Activated CD4-positive, alpha-beta T cell treated with anti-CD3 and anti-CD28 coated beads, Interleukin-2, amount 10 ng/mL, durations not matched to agents 7 days and 5 days (primary cell): ENCODE measurements at regions of chr12 and their contacts with region 1.

Region 1: GRCh38 chr12:49069507-49070346 is at the start of gene RHEBL1:
- DNase-seq: peak; percentile 99
- H3K4me3 Mint-ChIP-seq: peak within 1 kb of the TSS; percentile 86
- H3K27ac Mint-ChIP-seq: peak within 1 kb of the TSS; percentile 85
- H3K4me1 Mint-ChIP-seq: peaks cover 24% of the 10 kb centered on the region
- H3K27me3 Mint-ChIP-seq: no peaks in the 10 kb centered on the region
- total RNA-seq, gene RHEBL1: 4.6 to 6.4 TPM

Region 2: DNA sequence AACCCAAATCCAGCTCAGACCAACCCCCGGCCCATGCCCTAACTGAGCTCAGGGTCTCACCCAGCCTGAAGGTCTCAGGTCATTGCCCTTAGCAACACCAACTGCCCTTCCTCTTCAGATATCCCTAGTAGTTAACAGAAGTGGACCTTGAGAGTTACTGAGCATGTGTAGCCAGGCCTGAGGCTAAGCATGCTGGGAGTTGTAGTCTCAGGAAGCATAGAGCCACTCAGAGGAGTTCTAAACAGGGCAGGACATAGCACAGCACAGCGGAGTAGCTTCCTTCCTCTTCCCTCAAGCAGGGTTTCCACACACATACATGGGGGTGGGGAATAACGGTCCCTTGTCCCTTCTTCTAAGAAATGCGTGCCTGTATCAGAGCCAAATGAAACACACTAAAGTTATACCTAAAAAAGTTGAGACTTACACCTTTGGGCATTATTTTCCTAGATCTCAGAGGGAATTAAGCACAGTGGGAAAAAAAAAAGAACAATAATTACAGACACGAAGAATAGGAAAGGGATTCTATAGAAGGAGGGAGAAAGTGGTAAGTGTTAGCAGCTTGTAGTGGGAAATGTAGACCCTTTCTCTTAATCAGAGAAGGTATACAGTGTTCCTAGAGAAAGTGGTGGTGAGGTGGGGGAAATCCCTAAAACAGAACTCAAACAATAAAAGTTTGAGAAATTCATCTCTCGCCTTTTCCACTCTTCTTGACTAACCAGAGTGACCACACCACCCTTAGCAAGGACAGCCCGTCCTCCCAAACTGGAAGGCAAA is 13.6 kb before region 1 on chr12:
- CTCF ChIA-PET with region 1: interaction called, 11 read pairs
- POLR2A ChIA-PET with region 1: interaction called, 3 read pairs
- DNase-seq: peak; percentile 70
- H3K4me3 Mint-ChIP-seq: peak overlapping the region; percentile 94
- H3K27ac Mint-ChIP-seq: peak overlapping the region; percentile 19
- H3K4me1 Mint-ChIP-seq: peaks cover 44% of the 10 kb centered on the region
- H3K27me3 Mint-ChIP-seq: no peaks in the 10 kb centered on the region

Region 3: GRCh38 chr12:49079793-49080192 is 10.1 kb after region 1 on chr12:
- CTCF ChIA-PET with region 1: interaction called, 20 read pairs
- POLR2A ChIA-PET with region 1: interaction called, 7 read pairs
- DNase-seq: no peak
- H3K4me3 Mint-ChIP-seq: no peak overlapping the region
- H3K27ac Mint-ChIP-seq: no peak overlapping the region
- H3K4me1 Mint-ChIP-seq: no peaks in the 10 kb centered on the region
- H3K27me3 Mint-ChIP-seq: peaks cover 9% of the 10 kb centered on the region

Region 4: GRCh38 chr12:49088190-49088931 is 18.6 kb after region 1 on chr12:
- CTCF ChIA-PET with region 1: interaction called, 34 read pairs
- POLR2A ChIA-PET with region 1: interaction called, 7 read pairs
- DNase-seq: peak; percentile 80
- H3K4me3 Mint-ChIP-seq: peak overlapping the region; percentile 4
- H3K27ac Mint-ChIP-seq: no peak overlapping the region
- H3K4me1 Mint-ChIP-seq: peaks cover 55% of the 10 kb centered on the region
- H3K27me3 Mint-ChIP-seq: peaks cover 44% of the 10 kb centered on the region

Region 5: GRCh38 chr12:49098035-49098451 is 28.3 kb after region 1 on chr12:
- CTCF ChIA-PET with region 1: interaction called, 12 read pairs
- POLR2A ChIA-PET with region 1: interaction called, 4 read pairs
- DNase-seq: peak; percentile 69
- H3K4me3 Mint-ChIP-seq: no peak overlapping the region
- H3K27ac Mint-ChIP-seq: no peak overlapping the region
- H3K4me1 Mint-ChIP-seq: peaks cover 18% of the 10 kb centered on the region
- H3K27me3 Mint-ChIP-seq: peaks cover 27% of the 10 kb centered on the region

Region 6: GRCh38 chr12:49110464-49111155 is 40.9 kb after region 1 on chr12 and contains the start of gene LMBR1L:
- CTCF ChIA-PET with region 1: interaction called, 10 read pairs
- POLR2A ChIA-PET with region 1: no interaction called
- DNase-seq: peak; percentile 99
- H3K4me3 Mint-ChIP-seq: peak within 1 kb of the TSS; percentile 96
- H3K27ac Mint-ChIP-seq: peak within 1 kb of the TSS; percentile 94
- H3K4me1 Mint-ChIP-seq: peaks cover 25% of the 10 kb centered on the region
- H3K27me3 Mint-ChIP-seq: no peaks in the 10 kb centered on the region
- total RNA-seq, gene LMBR1L: 60.3 to 62.3 TPM

Region 7: DNA sequence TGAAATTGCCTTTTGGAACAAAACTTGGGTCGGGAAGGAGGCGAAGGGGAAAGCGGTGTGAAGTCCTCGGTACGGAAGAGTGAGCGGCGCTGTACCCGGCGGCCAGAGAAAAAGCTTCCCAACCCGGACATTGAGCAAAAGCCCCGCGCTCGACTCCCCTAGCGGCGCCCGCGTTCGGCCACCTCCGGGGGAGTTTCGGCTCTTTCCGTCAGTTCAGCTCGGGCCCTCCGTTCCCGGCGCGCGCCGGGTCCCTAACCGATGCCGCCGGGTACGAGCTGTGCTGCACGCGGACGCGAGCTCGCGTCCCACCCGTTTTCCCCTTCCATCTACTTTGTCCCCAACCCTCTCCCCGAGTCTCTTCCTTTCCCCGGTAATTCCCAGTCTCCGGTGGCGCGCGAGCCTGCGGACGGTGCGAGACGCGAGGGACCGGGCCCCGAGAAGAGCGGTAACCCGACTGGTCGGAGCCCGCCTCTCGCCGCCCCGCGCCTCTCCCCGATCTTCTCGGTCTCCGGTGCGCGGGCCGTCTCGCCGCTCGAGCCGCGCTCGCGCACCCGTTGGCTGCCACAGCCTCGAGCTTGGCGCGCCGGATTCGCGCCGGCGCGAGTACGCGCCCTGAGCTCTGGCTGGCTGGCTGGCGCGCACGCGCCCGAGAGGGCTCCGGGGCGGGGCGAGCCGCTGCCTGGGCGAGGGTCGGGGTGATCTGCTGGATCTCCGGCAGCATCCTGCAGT is 297.1 kb after region 1 on chr12:
- CTCF ChIA-PET with region 1: no interaction called
- POLR2A ChIA-PET with region 1: no interaction called
- DNase-seq: peak; percentile 88
- H3K4me3 Mint-ChIP-seq: peak overlapping the region; percentile 90
- H3K27ac Mint-ChIP-seq: peak overlapping the region; percentile 97
- H3K4me1 Mint-ChIP-seq: peaks cover 43% of the 10 kb centered on the region
- H3K27me3 Mint-ChIP-seq: no peaks in the 10 kb centered on the region